CD4-positive, alpha-beta T cell (primary cell): ENCODE measurements at regions of chr11 and their contacts with region 1.

Region 1: GRCh38 chr11:76318744-76319384 is 62.1 kb downstream of the THAP12 start:
- DNase-seq: peak; percentile 78 to 94 (median 84)
- ATAC-seq: peak; percentile 97
- H3K4me3 ChIP-seq: no peak overlapping the region
- H3K4me3 Mint-ChIP-seq: no peak overlapping the region
- H3K27ac ChIP-seq: no peak overlapping the region
- H3K27ac Mint-ChIP-seq: no peak overlapping the region
- H3K4me1 ChIP-seq: peaks cover 7% of the 10 kb centered on the region
- H3K4me1 Mint-ChIP-seq: no peaks in the 10 kb centered on the region
- H3K27me3 ChIP-seq: peaks cover 21% of the 10 kb centered on the region in 2 experiments
- H3K27me3 Mint-ChIP-seq: peaks cover 42% of the 10 kb centered on the region
- CTCF ChIP-seq: peak; percentile 84

Region 2: GRCh38 chr11:75706260-75706729 is 612.6 kb before region 1 on chr11:
- CTCF ChIA-PET with region 1: no interaction called
- POLR2A ChIA-PET with region 1: no interaction called
- intact Hi-C with region 1: loop called in 1 of 2 experiments (anchors 10 kb)
- DNase-seq: peak; percentile 34 to 85 (median 51)
- ATAC-seq: peak; percentile 72
- H3K4me3 ChIP-seq: no peak overlapping the region
- H3K4me3 Mint-ChIP-seq: no peak overlapping the region
- H3K27ac ChIP-seq: no peak overlapping the region
- H3K27ac Mint-ChIP-seq: no peak overlapping the region
- H3K4me1 ChIP-seq: peaks cover 8% of the 10 kb centered on the region
- H3K4me1 Mint-ChIP-seq: peaks cover 8% of the 10 kb centered on the region
- H3K27me3 ChIP-seq: peaks cover 0 to 3% of the 10 kb centered on the region in 2 experiments
- H3K27me3 Mint-ChIP-seq: no peaks in the 10 kb centered on the region
- CTCF ChIP-seq: peak; percentile 96

Region 3: DNA sequence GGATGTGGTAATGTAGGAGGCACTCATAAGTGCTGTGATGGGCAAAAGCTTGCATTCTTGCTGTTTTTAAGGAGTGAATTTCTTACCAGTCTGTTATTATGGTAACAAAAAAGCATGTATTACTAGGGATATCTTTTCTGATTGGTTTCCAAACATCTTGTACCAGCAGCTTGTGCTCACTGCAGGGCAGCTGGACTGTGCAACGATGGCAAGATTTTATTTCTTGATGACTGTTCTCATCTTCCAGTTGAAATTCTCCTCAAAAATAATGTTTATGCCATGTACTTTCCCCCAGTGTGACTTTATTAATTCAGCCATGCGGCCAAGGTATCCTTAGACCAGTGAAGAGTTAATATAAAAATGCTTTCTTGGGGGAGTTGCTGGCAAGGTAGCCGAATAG is 161.4 kb after region 1 on chr11:
- CTCF ChIA-PET with region 1: no interaction called
- POLR2A ChIA-PET with region 1: no interaction called
- intact Hi-C with region 1: no loop called
- DNase-seq: no peak
- ATAC-seq: no peak
- H3K4me3 ChIP-seq: no peak overlapping the region
- H3K4me3 Mint-ChIP-seq: no peak overlapping the region
- H3K27ac ChIP-seq: no peak overlapping the region
- H3K27ac Mint-ChIP-seq: no peak overlapping the region
- H3K4me1 ChIP-seq: no peaks in the 10 kb centered on the region
- H3K4me1 Mint-ChIP-seq: peaks cover 24% of the 10 kb centered on the region
- H3K27me3 ChIP-seq: no peaks in the 10 kb centered on the region
- H3K27me3 Mint-ChIP-seq: no peaks in the 10 kb centered on the region
- CTCF ChIP-seq: no peak

Region 4: DNA sequence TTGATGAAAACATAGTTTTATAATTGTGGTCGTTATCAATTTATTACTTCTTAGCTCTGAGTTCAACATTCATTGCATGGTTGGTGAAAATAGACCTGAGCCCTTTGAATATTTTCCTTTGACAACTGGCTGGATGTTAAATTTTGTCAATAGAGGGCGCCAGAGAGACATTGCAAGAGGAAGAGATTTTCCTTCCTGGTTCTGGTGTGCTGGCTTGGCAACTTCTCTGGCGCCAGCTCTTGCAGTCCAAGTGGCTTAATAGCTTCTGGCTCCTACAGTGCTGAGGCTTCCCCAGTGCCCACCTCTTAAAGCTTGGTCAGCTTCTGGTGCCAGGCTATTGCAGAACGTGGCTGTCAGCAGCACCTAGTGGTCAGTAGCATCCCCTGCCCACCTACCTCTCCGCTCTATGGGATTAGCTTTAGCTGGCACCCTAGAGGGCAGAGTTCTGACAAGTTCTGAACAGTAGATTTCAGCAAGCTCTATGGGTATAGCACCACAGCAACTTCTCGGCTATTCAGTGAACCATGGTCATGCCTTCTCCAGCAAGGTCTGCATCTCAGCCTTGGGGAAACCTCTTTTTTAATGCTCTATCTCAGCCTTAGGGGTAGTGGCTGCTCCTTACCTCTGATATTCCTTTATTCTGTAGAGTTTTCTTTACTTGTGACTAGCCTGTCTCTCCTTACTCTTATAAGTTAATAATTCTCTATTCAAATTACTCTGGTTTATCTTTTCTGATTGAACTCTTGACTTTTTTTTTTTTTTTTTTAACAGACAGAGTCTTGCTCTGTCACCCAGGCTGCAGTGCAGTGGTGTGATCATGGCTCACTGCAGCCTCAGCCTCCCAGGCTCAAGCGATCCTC is 601.3 kb after region 1 on chr11:
- CTCF ChIA-PET with region 1: no interaction called
- POLR2A ChIA-PET with region 1: no interaction called
- intact Hi-C with region 1: no loop called
- DNase-seq: peak; percentile 7 to 85 (median 46)
- ATAC-seq: peak; percentile 80
- H3K4me3 ChIP-seq: peak overlapping the region; percentile 36
- H3K4me3 Mint-ChIP-seq: peak overlapping the region; percentile 72
- H3K27ac ChIP-seq: no peak overlapping the region
- H3K27ac Mint-ChIP-seq: no peak overlapping the region
- H3K4me1 ChIP-seq: peaks cover 5% of the 10 kb centered on the region
- H3K4me1 Mint-ChIP-seq: peaks cover 13% of the 10 kb centered on the region
- H3K27me3 ChIP-seq: no peaks in the 10 kb centered on the region
- H3K27me3 Mint-ChIP-seq: no peaks in the 10 kb centered on the region
- CTCF ChIP-seq: peak; percentile 78